ENCODE measurements at regions of chr13 and their contacts with region 1.

Region 1: DNA sequence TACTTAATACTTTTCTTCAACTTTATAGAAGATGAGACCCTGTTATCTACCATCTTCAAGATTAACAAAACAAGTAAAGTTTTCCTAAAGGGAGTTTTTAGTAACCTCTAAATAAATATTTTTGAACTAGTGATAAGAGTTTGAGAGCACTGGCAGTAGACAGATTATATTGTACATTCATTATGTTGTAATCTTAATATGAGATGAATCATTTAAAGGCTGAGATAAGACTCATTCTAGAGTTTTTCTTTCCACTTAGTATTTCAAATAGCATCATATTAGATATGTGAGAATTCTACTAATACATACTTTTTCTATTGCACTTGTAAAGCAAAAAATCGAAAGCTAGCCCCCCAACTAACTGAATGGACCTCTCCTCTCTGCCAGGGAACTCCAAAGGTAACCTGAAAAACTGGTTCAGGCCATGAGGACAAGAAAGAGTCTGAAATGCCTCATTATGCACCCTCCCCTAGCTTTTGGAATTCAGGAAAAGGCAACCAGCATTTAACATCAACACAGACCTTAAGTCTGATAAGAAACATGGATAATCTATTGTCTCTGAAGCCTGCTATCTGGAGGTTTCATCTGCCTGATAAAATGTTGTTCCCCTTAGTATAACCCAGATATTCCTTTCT is 875.4 kb upstream of the SLC10A2 start:
- DNase-seq: no peak
- ATAC-seq: no peak
- H3K4me3 ChIP-seq: no peak overlapping the region
- H3K4me3 Mint-ChIP-seq: no peak overlapping the region
- H3K27ac ChIP-seq: no peak overlapping the region
- H3K27ac Mint-ChIP-seq: no peak overlapping the region
- H3K4me1 ChIP-seq: no peaks in the 10 kb centered on the region
- H3K4me1 Mint-ChIP-seq: no peaks in the 10 kb centered on the region
- H3K27me3 ChIP-seq: no peaks in the 10 kb centered on the region
- H3K27me3 Mint-ChIP-seq: no peaks in the 10 kb centered on the region
- CTCF ChIP-seq: no peak

Region 2: GRCh38 chr13:102504002-102504401 is 1437.6 kb before region 1 on chr13:
- CTCF ChIA-PET with region 1: no interaction called
- POLR2A ChIA-PET with region 1: no interaction called
- intact Hi-C with region 1: no loop called
- DNase-seq: no peak
- ATAC-seq: no peak
- H3K4me3 ChIP-seq: no peak overlapping the region
- H3K4me3 Mint-ChIP-seq: no peak overlapping the region
- H3K27ac ChIP-seq: no peak overlapping the region
- H3K27ac Mint-ChIP-seq: no peak overlapping the region
- H3K4me1 ChIP-seq: no peaks in the 10 kb centered on the region
- H3K4me1 Mint-ChIP-seq: no peaks in the 10 kb centered on the region
- H3K27me3 ChIP-seq: no peaks in the 10 kb centered on the region
- H3K27me3 Mint-ChIP-seq: peaks cover 15% of the 10 kb centered on the region
- CTCF ChIP-seq: no peak

Region 3: DNA sequence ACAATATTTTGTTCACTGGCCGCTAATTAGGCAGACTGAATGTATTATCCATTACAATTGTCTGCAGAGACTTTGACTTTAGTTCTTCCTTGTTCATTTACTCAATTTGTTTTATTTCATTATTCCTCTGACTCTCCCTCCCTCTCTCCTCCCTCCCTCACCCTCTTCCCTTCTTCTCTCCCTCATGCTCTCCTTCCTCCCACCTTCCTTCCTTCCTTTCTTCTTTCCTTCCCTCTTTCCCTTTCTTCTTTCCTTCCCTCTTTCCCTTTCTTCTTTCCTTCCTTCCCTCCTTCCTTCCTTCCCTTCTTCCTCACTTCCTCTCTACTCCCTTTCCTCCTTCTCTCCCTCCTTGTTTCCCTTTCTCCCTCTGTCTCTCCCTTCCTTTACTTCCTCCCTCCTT is 715.6 kb after region 1 on chr13:
- CTCF ChIA-PET with region 1: no interaction called
- POLR2A ChIA-PET with region 1: no interaction called
- intact Hi-C with region 1: loop called in 1 of 2 experiments (anchors 5 kb)
- DNase-seq: no peak
- ATAC-seq: no peak
- H3K4me3 ChIP-seq: no peak overlapping the region
- H3K4me3 Mint-ChIP-seq: no peak overlapping the region
- H3K27ac ChIP-seq: no peak overlapping the region
- H3K27ac Mint-ChIP-seq: no peak overlapping the region
- H3K4me1 ChIP-seq: no peaks in the 10 kb centered on the region
- H3K4me1 Mint-ChIP-seq: no peaks in the 10 kb centered on the region
- H3K27me3 ChIP-seq: no peaks in the 10 kb centered on the region
- H3K27me3 Mint-ChIP-seq: no peaks in the 10 kb centered on the region
- CTCF ChIP-seq: no peak